Brain microvascular endothelial cell (primary cell): ENCODE measurements at regions of chr18 and their contacts with region 1.

Region 1: DNA sequence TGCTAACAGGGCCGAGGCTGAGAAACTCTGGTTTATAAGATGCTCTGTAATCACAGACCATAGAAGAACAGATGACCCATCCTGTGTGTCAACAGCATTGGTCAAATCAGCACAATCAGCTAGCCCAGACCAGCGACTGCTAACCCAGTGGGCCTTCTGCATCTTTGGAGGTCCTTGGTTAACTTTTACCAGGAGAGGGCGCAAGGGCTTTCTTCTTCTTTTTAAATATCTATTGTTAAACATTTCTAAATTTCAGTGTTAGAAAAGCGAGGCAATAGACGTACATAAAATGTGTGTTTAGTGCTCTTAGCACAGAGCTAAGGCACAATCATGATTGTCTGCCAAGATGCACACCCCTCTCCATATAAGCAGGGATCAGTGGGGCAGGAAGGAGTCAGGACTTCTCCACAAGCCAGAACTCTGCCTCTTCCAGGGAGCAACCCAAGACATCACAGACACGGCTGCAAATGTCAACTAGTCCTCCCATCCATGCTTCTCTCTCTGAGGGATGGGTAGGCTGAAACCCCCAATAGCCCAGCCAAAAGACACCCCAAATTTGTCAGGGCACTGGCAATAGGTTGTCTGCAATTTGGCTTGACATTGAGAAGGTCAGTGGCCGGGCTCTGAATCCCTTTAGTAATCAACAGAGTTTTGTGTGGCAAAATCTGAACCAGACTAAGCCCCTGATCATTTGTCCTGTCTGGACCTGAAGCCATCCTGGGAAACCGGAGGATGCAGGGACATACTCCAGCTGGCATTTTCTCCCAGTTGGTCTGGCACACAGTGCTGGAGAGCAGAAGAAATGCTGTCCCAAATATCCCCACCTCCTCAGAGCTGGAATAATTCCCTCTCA is 188.2 kb downstream of the BCL2 start:
- DNase-seq: peak; percentile 59
- H3K4me3 ChIP-seq: no peak overlapping the region
- H3K27ac ChIP-seq: no peak overlapping the region
- H3K27me3 ChIP-seq: no peaks in the 10 kb centered on the region
- CTCF ChIP-seq: peak; percentile 73

Region 2: GRCh38 chr18:63320046-63320689 is 188.8 kb after region 1 on chr18:
- in situ Hi-C with region 1: loop called (anchors 10 kb)
- DNase-seq: peak; percentile 63
- H3K4me3 ChIP-seq: peak overlapping the region; percentile 71
- H3K27ac ChIP-seq: no peak overlapping the region
- H3K27me3 ChIP-seq: peaks cover 4% of the 10 kb centered on the region
- CTCF ChIP-seq: no peak

Region 3: GRCh38 chr18:63617049-63617914 is 485.9 kb after region 1 on chr18:
- in situ Hi-C with region 1: no loop called
- DNase-seq: no peak
- H3K4me3 ChIP-seq: no peak overlapping the region
- H3K27ac ChIP-seq: no peak overlapping the region
- H3K27me3 ChIP-seq: no peaks in the 10 kb centered on the region
- CTCF ChIP-seq: no peak